Activated T-helper 1 cell treated with anti-CD3 and anti-CD28 coated beads, Interleukin-12 subunit alpha, Interleukin-12 subunit beta, Interleukin-2, Interleukin-4 antibody, amounts not matched to agents 30 ng/mL and 10 ng/mL and 1 ng/mL, durations not matched to agents 14 hours and 24 hours and 36 hours (primary cell): ENCODE measurements at regions of chr19 and their contacts with region 1.

Region 1: DNA sequence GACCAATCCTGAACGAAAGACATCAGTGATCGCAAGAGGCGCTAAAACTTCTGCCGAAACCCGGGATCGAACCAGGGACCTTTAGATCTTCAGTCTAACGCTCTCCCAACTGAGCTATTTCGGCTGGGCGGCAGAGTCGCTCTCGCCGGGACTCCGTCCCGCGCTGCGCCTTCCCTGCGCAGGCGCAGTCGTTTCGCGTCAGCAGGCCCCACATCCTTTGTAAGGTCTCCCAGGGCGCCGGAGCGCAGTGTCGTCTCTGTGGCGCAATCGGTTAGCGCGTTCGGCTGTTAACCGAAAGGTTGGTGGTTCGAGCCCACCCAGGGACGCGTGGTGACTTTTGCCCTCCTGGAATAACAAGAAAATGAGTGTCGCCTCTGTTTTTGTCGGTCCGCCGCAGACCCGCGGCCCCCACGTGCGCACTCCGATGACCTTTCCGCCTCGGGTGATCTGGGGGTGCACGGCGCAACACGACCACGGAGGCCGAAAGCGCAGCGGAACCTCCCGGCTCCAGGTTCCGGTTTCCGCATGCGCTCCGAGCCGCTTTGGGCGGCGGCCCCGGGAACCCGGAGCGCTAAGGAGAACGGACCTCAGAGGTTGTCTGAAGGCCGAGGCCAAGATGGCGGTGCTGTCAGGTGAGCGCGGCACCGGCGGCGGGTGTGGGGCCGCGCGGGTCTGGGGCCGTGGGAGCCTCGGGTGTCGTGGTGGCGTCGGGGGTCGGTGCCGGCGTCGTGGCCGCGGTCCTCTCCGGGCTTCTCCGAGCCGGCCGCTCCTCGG is at the start of gene NDUFS7:
- DNase-seq: peak; percentile 89
- H3K4me3 Mint-ChIP-seq: peak within 1 kb of the TSS; percentile 84
- H3K27ac Mint-ChIP-seq: peak within 1 kb of the TSS; percentile 99
- H3K4me1 Mint-ChIP-seq: peaks cover 18% of the 10 kb centered on the region
- H3K27me3 Mint-ChIP-seq: peaks cover 9% of the 10 kb centered on the region
- total RNA-seq, gene NDUFS7: 97.9 and 98.8 TPM in 2 replicates

Region 2: GRCh38 chr19:1355568-1356507 is 27.7 kb before region 1 on chr19:
- intact Hi-C with region 1: loop called (anchors 1 kb)
- DNase-seq: no peak
- H3K4me3 Mint-ChIP-seq: peak overlapping the region; percentile 88
- H3K27ac Mint-ChIP-seq: peak overlapping the region; percentile 82
- H3K4me1 Mint-ChIP-seq: peaks cover 11% of the 10 kb centered on the region
- H3K27me3 Mint-ChIP-seq: peaks cover 5% of the 10 kb centered on the region

Region 3: GRCh38 chr19:1366899-1367870 is 16.3 kb before region 1 on chr19:
- intact Hi-C with region 1: no loop called
- DNase-seq: no peak
- H3K4me3 Mint-ChIP-seq: no peak overlapping the region
- H3K27ac Mint-ChIP-seq: no peak overlapping the region
- H3K4me1 Mint-ChIP-seq: peaks cover 25% of the 10 kb centered on the region
- H3K27me3 Mint-ChIP-seq: no peaks in the 10 kb centered on the region

Region 4: GRCh38 chr19:1406774-1407499 is 23.4 kb after region 1 on chr19:
- intact Hi-C with region 1: loop called (anchors 1 kb)
- DNase-seq: peak; percentile 100
- H3K4me3 Mint-ChIP-seq: peak overlapping the region; percentile 76
- H3K27ac Mint-ChIP-seq: peak overlapping the region; percentile 83
- H3K4me1 Mint-ChIP-seq: peaks cover 33% of the 10 kb centered on the region
- H3K27me3 Mint-ChIP-seq: peaks cover 7% of the 10 kb centered on the region

Region 5: GRCh38 chr19:1438035-1438932 is 54.8 kb after region 1 on chr19 and contains the start of gene RPS15:
- intact Hi-C with region 1: loop called (anchors 1 kb)
- DNase-seq: peak; percentile 95
- H3K4me3 Mint-ChIP-seq: peak within 1 kb of the TSS; percentile 98
- H3K27ac Mint-ChIP-seq: peak within 1 kb of the TSS; percentile 99
- H3K4me1 Mint-ChIP-seq: no peaks in the 10 kb centered on the region
- H3K27me3 Mint-ChIP-seq: no peaks in the 10 kb centered on the region
- total RNA-seq, gene RPS15: 1,387 and 1,455 TPM in 2 replicates

Region 6: DNA sequence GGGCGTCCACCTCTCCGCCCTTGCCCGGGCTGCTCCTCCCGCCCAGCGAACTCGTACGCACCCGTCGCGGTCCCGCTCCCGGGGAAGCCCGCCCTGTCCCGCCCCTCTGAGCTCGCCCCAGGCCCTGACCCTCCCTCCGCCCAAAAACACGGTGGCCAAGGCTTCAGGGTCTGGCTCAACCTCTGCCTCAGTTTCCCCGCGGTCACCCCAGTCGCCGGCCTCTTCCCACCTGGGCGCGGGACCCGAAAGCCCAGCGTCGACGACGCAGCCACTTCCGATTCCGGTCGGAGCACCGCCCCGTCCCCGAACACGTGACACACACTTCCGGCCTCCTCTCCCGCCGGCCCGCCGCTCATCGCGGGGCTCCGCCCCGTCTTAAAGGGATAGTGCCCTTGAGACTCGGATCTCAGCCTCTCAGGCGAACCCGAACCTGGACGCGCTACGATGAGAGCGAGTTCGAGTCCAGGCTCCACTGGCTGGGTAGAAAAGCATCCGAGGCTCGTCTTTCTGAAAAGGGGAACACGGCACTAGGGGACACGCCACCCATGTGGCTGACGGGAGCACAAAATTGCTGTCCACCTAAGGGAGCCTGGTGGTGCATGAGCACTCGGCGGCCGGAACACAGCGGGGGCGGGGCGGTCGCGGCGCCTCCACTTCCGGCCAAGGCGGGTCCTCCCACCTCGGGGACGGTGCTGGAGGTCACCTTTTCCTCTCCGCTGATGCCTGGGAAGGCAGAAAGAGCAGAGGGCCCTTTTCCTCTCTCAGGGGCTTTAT is 95.6 kb after region 1 on chr19 and contains the start of gene C19orf25:
- intact Hi-C with region 1: loop called (anchors 1 kb)
- DNase-seq: peak; percentile 92
- H3K4me3 Mint-ChIP-seq: peak within 1 kb of the TSS; percentile 96
- H3K27ac Mint-ChIP-seq: peak within 1 kb of the TSS; percentile 97
- H3K4me1 Mint-ChIP-seq: peaks cover 12% of the 10 kb centered on the region
- H3K27me3 Mint-ChIP-seq: no peaks in the 10 kb centered on the region
- total RNA-seq, gene C19orf25: 37.1 and 38.5 TPM in 2 replicates